GM18951 (cell line): ENCODE measurements at regions of chr15 and their contacts with region 1.

Region 1: DNA sequence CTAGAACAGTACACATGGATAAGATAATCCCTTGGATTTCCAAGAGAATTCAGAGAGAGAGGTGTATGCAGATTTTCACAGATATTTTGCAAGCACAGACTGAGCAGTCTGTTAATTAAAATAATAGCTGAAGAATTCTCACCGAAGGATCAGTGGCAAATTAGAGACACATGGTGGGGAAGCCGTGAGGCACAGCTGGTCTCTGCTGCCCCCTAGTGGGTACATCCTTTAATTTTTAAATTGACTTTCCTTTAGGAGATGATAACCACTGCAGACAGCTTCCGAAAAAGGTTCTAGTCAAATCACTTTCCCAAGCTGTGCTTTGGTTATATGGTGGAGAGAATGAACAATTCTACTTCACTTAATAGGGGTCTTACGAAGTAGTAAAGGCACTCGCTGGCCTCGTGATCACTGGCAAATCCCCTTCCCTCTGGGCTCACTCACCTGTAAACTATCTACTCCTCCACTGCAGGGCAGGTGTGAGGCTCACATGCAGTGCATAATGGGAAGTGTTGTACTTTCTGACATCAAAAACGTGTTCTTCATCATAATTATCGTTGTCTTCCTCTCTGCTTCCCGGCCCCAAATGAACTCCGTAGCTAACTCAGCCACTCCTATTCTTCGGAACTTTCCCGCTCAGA is 19.5 kb downstream of the MESD start:
- POLR2A ChIP-seq: no peak

Region 2: DNA sequence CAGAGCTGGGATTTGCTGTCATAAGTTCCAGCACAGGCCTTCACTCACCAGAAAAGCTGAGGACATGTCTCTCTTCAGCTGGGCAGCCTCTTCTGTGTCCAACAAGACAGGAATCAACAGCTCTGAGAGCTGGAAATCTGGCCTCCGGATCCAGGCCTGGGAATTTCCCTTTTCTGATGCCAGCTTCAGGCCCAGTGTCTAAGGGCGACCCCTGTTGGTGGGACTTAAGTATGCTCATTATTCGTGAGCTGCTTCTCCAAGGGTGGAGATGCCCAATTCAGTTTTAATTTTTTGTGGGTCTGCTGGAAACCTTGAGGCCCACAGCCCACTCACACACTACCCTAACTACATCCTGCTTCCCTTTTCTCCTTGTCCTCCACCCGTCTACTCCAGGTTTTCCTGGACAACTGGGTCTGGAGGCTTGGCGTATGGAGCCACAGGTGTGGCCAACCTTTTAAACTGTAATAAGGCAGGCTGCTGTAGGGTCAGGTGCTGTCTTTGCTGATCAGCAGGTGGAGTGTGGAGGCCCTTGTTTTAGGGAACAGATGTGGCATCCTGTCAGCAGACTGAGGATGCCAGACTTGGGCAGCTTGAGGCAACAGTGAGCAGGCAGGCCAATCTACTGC is 193.6 kb before region 1 on chr15:
- in situ Hi-C with region 1: loop called (anchors 25 kb)
- POLR2A ChIP-seq: no peak